ENCODE measurements at regions of chr6 and their contacts with region 1.

Region 1: DNA sequence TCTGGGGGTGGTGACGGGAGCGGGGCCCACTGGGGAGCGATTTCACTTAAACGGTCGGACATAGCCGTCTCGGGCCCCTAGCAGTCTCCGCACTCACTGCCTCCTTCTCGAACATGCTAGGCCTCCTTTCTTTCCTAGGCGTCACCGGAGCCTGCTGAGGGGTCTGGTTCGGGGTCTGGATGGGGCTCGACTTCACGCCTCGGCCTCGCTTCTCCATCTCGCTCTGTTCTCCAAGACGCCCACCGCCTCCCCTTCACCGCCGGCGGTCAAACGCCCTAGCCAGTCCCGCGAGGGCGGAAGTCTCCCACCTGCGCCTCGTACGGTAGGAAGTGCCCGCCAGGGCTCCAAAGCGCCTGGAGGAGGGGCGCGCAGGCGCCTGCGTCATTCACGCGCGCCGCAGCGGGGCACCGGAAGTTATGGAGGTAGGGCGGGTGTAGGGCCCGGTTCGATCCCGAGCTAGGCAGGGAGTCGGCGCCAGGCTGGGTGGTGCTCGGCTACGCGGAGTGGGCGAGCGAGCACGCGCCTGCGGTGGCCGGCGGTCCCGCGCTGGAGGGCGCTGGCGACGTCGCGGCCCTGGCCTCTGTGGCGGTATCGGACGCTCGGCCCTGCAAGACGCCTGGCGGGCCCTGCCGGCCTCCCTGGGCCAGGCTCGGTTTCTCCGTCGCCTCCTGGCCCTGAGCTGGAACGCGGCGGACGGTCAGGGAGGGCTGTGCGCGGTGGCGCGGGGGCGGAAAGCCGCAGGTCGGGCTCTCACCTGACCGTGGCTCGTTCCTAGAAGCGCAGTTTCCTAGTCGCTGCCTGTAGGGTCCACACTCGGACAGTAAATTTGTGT is at the starts of genes DYNLT2 and ERMARD:
- DNase-seq: peak; percentile 96
- H3K4me3 ChIP-seq: peak within 1 kb of the TSS; percentile 80
- H3K27ac ChIP-seq: peak within 1 kb of the TSS; percentile 95
- H3K4me1 ChIP-seq: peaks cover 10% of the 10 kb centered on the region
- H3K27me3 ChIP-seq: no peaks in the 10 kb centered on the region
- CTCF ChIP-seq: no peak
- total RNA-seq, gene DYNLT2: 1.4 to 2.2 TPM
- total RNA-seq, gene ERMARD: 14.2 to 15.7 TPM

Region 2: GRCh38 chr6:169701954-169702839 is 49.3 kb before region 1 on chr6 and contains the starts of genes C6orf120 and WDR27:
- intact Hi-C with region 1: loop called (anchors 10 kb)
- DNase-seq: peak; percentile 98
- H3K4me3 ChIP-seq: peak within 1 kb of the TSS; percentile 92
- H3K27ac ChIP-seq: peak within 1 kb of the TSS; percentile 94
- H3K4me1 ChIP-seq: peaks cover 8% of the 10 kb centered on the region
- H3K27me3 ChIP-seq: no peaks in the 10 kb centered on the region
- CTCF ChIP-seq: no peak
- total RNA-seq, gene C6orf120: 28.7 to 31.9 TPM
- total RNA-seq, gene WDR27: 17.4 to 43.8 TPM

Region 3: GRCh38 chr6:169933839-169934698 is 182.6 kb after region 1 on chr6:
- intact Hi-C with region 1: no loop called
- DNase-seq: peak; percentile 55
- H3K4me3 ChIP-seq: no peak overlapping the region
- H3K27ac ChIP-seq: no peak overlapping the region
- H3K4me1 ChIP-seq: no peaks in the 10 kb centered on the region
- H3K27me3 ChIP-seq: no peaks in the 10 kb centered on the region
- CTCF ChIP-seq: no peak

Region 4: GRCh38 chr6:170554013-170554795 is 802.7 kb after region 1 on chr6 and contains the start of gene TBP:
- intact Hi-C with region 1: loop called (anchors 2 kb)
- DNase-seq: peak; percentile 98
- H3K4me3 ChIP-seq: peak within 1 kb of the TSS; percentile 72
- H3K27ac ChIP-seq: peak within 1 kb of the TSS; percentile 86
- H3K4me1 ChIP-seq: peaks cover 19% of the 10 kb centered on the region
- H3K27me3 ChIP-seq: no peaks in the 10 kb centered on the region
- CTCF ChIP-seq: no peak
- total RNA-seq, gene TBP: 11.7 to 13.4 TPM